GM10248 (cell line): ENCODE measurements at regions of chr12 and their contacts with region 1.

Region 1: DNA sequence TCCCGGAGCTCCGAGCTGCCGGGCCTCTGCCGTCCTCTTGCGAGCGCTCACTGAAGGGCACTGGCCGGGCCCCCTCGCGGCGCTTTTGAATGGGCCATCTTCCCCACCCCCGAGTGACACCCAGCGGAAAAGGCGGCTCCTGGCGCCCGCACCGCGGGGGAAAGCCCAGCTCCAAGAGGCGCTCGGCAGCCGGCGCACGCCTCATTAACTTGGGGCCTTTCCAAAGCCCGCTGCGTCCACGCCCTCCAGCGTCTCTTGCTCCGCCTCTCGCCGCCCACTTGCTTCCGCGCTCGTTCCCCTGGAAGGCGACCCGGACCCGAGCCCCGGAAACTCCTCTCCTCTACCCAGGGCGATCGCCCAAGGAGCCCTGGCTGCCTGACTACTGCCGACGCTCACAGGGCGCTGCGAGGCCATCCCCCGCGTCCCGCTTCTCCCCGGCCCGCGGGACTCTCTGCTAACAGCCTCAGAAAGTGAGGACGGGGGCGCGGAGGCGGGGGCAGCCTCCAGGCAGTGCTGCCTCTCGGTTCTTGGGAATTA is at the start of gene PHLDA1:
- DNase-seq: peak; percentile 94
- CTCF ChIP-seq: peak; percentile 56

Region 2: GRCh38 chr12:75480469-75480949 is 551.1 kb before region 1 on chr12 and contains the start of gene GLIPR1:
- CTCF ChIA-PET with region 1: interaction called, 24 read pairs
- POLR2A ChIA-PET with region 1: interaction called, 9 read pairs
- DNase-seq: peak; percentile 69
- CTCF ChIP-seq: no peak

Region 3: DNA sequence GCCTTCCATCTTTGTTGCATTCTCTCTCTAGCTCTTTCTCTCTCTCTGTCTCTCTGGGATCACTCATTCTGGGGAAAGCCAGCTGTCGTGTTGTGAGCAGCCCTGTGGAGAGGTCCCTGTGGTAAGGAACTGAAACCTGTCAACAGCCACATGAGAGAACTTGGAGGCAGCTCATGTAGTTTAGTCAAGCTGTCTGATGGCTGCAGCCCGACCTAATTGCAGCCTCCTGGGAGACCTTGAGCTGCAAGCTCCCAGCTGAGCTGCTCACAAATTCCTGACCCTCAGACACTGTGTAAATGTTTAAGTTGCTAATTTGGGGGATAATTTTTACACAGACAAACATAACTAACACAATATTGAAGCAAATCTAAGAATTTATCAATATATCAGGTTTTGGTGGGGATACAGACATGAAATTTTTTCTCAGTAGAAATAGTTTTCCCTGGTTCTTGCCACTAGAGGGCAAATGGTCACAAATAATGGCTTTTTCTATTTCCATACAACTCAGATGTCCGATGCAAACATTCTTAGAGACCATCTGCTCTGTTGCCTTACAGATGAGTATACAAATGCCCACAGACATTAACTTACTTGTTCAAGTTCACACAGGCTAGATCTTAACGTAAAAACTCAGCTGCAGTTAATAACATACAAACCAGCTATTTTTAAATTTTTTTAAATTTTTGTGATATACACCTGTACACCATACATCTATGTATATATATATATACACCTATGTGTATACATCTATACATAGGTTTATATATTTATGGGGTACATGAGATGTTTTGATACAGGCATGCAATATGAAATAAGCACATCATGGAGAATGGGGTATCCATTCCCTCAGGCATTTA is 504.7 kb before region 1 on chr12:
- CTCF ChIA-PET with region 1: interaction called, 48 read pairs
- POLR2A ChIA-PET with region 1: interaction called, 12 read pairs
- DNase-seq: peak; percentile 45
- CTCF ChIP-seq: peak; percentile 43

Region 4: GRCh38 chr12:76014007-76014406 is 17.6 kb before region 1 on chr12:
- CTCF ChIA-PET with region 1: interaction called, 5 read pairs
- POLR2A ChIA-PET with region 1: interaction called, 10 read pairs
- DNase-seq: no peak
- CTCF ChIP-seq: no peak

Region 5: GRCh38 chr12:76020731-76021672 is 10.6 kb before region 1 on chr12:
- CTCF ChIA-PET with region 1: interaction called, 16 read pairs
- POLR2A ChIA-PET with region 1: interaction called, 3 read pairs
- DNase-seq: peak; percentile 19
- CTCF ChIP-seq: no peak

Region 6: GRCh38 chr12:76247026-76247646 is 215.5 kb after region 1 on chr12:
- CTCF ChIA-PET with region 1: no interaction called
- POLR2A ChIA-PET with region 1: no interaction called
- DNase-seq: no peak
- CTCF ChIP-seq: no peak